ENCODE measurements at regions of chr3 and their contacts with region 1.

Region 1: GRCh38 chr3:170961616-170962400 is 53.4 kb upstream of the EIF5A2 start:
- DNase-seq: peak; percentile 70

Region 2: GRCh38 chr3:171162986-171163723 is 201.3 kb after region 1 on chr3:
- in situ Hi-C with region 1: loop called (anchors 25 kb)
- DNase-seq: peak; percentile 35